H1 (cell line): ENCODE measurements at regions of chr17 and their contacts with region 1.

Region 1: GRCh38 chr17:82440991-82441627 is 9.4 kb downstream of the CYBC1 start:
- DNase-seq: no peak
- H3K4me3 ChIP-seq: no peak overlapping the region
- H3K27ac ChIP-seq: peak overlapping the region; percentile 23; the same call in 1 of the 2 replicates
- H3K4me1 ChIP-seq: peaks cover 0 to 18% (median 8%) of the 10 kb centered on the region in 4 experiments; a peak in 6 of 7 replicates
- H3K27me3 ChIP-seq: no peaks in the 10 kb centered on the region
- CTCF ChIP-seq: no peak
- EP300 ChIP-seq: no peak; a peak in 1 of 3 replicates
- POLR2A ChIP-seq: no peak
- RAD21 ChIP-seq: no peak

Region 2: DNA sequence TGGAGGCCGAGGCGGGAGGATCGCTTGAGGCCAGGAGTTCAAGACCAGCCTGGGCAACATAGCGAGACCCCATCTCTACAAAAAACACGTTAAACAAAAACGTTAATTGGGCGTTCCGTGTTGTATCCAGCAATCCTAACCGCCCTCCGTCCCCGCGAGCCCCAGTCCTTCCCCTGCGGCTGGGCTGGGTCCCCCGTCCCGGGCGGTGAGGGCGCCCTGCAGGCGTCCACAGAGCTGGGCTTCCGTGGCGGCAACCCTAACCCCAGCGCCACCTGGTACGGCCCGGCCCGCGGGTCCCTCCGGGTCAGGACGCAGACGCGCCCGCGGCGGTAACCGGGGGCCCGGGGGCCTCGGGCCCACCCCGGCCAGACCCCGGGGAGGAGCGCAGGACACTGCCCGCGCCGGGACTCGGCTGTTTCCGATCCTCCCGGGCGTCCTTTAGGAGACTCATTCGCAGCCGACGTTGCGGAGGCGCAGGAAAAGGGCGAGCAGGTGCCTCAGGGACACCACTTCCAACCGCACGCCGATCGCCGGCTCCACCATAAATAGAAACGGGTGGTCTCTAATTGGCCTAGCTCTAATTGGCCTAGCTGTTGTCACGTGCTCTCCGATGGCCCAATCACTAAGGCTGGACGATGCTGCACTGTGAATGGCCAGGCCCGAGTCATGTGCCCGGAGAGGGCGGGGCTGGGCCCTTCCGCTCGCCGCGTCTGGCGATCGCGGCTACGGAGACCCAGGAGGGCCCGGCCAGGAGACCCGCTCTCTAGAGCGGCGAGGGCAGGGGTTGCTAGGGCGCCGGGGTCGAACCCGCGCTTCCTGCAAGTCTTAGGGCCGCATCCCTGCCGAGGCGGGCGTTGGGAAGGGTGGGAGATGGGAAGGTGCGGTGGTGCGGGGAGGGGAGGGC is 148.6 kb before region 1 on chr17:
- CTCF ChIA-PET with region 1: no interaction called
- POLR2A ChIA-PET with region 1: no interaction called
- DNase-seq: peak; percentile 91 to 92
- H3K4me3 ChIP-seq: peak overlapping the region; percentile 57 to 98 (median 72)
- H3K27ac ChIP-seq: peak overlapping the region; percentile 69
- H3K4me1 ChIP-seq: peaks cover 0 to 13% (median 2%) of the 10 kb centered on the region in 4 experiments; a peak in 4 of 7 replicates
- H3K27me3 ChIP-seq: peaks cover 0 to 7% (median 4%) of the 10 kb centered on the region in 4 experiments; a peak in 3 of 7 replicates
- CTCF ChIP-seq: no peak
- EP300 ChIP-seq: no peak
- POLR2A ChIP-seq: peak in 1 of 2 experiments; percentile 76; a peak in 2 of 3 replicates
- RAD21 ChIP-seq: no peak

Region 3: GRCh38 chr17:82380860-82381702 is 60.0 kb before region 1 on chr17:
- CTCF ChIA-PET with region 1: no interaction called
- POLR2A ChIA-PET with region 1: no interaction called
- DNase-seq: no peak
- H3K4me3 ChIP-seq: no peak overlapping the region
- H3K27ac ChIP-seq: no peak overlapping the region
- H3K4me1 ChIP-seq: peaks cover 0 to 9% (median 4%) of the 10 kb centered on the region in 4 experiments; a peak in 5 of 7 replicates
- H3K27me3 ChIP-seq: peaks cover 0 to under 1% (median under 1%) of the 10 kb centered on the region in 4 experiments; a peak in 3 of 7 replicates
- CTCF ChIP-seq: no peak
- EP300 ChIP-seq: no peak
- POLR2A ChIP-seq: no peak
- RAD21 ChIP-seq: no peak

Region 4: GRCh38 chr17:82424001-82424862 is 16.9 kb before region 1 on chr17:
- CTCF ChIA-PET with region 1: interaction called, 17 read pairs
- POLR2A ChIA-PET with region 1: interaction called, 4 read pairs
- DNase-seq: peak in 1 of 2 experiments; percentile 82
- H3K4me3 ChIP-seq: no peak overlapping the region
- H3K27ac ChIP-seq: no peak overlapping the region
- H3K4me1 ChIP-seq: no peaks in the 10 kb centered on the region; a peak in 1 of 7 replicates
- H3K27me3 ChIP-seq: no peaks in the 10 kb centered on the region
- CTCF ChIP-seq: peak; percentile 53 to 82 (median 76)
- EP300 ChIP-seq: no peak
- POLR2A ChIP-seq: no peak
- RAD21 ChIP-seq: peak; percentile 30 to 49